Caco-2 (cell line): ENCODE measurements at regions of chr9 and their contacts with region 1.

Region 1: DNA sequence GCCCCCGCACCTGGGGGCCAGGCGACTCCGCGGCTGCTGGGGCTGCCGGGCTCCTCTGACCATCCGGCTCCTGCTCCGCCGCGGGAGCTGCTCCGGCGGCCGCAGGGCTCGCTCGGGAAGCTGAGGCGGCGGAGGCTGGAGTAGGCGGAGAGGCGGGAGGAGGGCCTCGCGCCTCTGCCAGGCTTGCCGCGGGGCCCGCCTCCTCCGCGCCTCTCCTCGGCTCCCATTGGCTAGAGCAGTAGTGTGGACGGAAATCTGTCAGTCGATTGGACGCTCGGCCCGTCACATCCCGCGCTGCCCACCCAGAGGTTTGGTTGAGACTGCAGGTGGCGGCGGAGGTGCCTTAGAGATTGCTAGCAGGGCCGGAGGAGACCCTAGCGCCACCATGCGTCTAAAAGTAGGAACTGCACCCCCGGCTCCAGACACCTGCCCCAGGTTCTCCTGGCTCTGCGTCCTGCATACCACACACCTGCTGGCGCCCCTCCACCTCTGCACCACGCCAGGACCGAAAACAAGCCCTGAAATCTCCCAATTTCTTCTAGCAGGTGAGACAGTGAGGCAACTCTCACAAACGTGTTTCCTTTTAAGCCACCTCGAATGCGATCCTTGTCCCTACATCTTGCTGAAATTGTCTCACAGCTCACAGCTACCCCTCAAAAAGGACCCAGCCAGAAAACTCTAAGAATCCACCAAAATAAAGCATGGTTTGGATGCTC is at the start of gene SCAI:
- DNase-seq: peak; percentile 99 to 100
- H3K4me3 ChIP-seq: peak within 1 kb of the TSS; percentile 92
- H3K4me3 Mint-ChIP-seq: peak within 1 kb of the TSS; percentile 96
- H3K27ac Mint-ChIP-seq: peak within 1 kb of the TSS; percentile 85
- H3K4me1 ChIP-seq: no peaks in the 10 kb centered on the region
- H3K4me1 Mint-ChIP-seq: no peaks in the 10 kb centered on the region
- H3K27me3 ChIP-seq: no peaks in the 10 kb centered on the region
- H3K27me3 Mint-ChIP-seq: no peaks in the 10 kb centered on the region
- CTCF ChIP-seq: peak; percentile 94 to 98
- total RNA-seq, gene SCAI: 10.1 and 13.0 TPM in 2 replicates

Region 2: GRCh38 chr9:124861342-124862229 is 281.9 kb before region 1 on chr9 and contains the starts of genes ARPC5L and RPL35:
- CTCF ChIA-PET with region 1: interaction called, 3 read pairs
- POLR2A ChIA-PET with region 1: no interaction called
- intact Hi-C with region 1: loop called (anchors 5 kb)
- DNase-seq: peak; percentile 95 to 97
- H3K4me3 ChIP-seq: peak within 1 kb of the TSS; percentile 85
- H3K4me3 Mint-ChIP-seq: peak within 1 kb of the TSS; percentile 85
- H3K27ac Mint-ChIP-seq: peak within 1 kb of the TSS; percentile 95
- H3K4me1 ChIP-seq: peaks cover 10% of the 10 kb centered on the region; the same call in 1 of the 2 replicates
- H3K4me1 Mint-ChIP-seq: peaks cover 7% of the 10 kb centered on the region
- H3K27me3 ChIP-seq: no peaks in the 10 kb centered on the region
- H3K27me3 Mint-ChIP-seq: no peaks in the 10 kb centered on the region
- CTCF ChIP-seq: peak in 1 of 2 experiments; percentile 30
- total RNA-seq, gene ARPC5L: 59.0 and 60.1 TPM in 2 replicates
- total RNA-seq, gene RPL35: 1,528 and 1,598 TPM in 2 replicates

Region 3: DNA sequence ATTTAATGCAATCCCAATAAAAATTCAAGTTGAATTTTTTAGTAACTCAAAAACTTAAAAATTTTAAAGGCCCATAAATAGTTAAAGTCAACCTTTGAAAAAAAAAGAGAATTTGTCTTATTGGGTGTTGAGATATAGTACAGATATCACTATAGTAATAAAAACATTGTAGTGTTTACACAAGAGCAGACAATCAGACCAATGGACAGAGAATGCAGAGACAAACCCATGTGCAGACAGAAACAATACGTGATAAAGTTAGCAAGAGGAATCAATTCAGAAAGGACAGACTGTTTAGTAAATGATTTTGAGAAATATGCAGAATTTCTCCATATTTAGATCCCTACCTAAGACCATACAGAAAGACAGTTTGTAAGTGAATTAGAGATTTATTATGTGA is 236.6 kb before region 1 on chr9:
- CTCF ChIA-PET with region 1: no interaction called
- POLR2A ChIA-PET with region 1: no interaction called
- intact Hi-C with region 1: no loop called
- DNase-seq: no peak
- H3K4me3 ChIP-seq: no peak overlapping the region
- H3K4me3 Mint-ChIP-seq: no peak overlapping the region
- H3K27ac Mint-ChIP-seq: no peak overlapping the region
- H3K4me1 ChIP-seq: no peaks in the 10 kb centered on the region
- H3K4me1 Mint-ChIP-seq: peaks cover 11% of the 10 kb centered on the region
- H3K27me3 ChIP-seq: no peaks in the 10 kb centered on the region
- H3K27me3 Mint-ChIP-seq: no peaks in the 10 kb centered on the region
- CTCF ChIP-seq: no peak

Region 4: GRCh38 chr9:124940693-124941453 is 202.7 kb before region 1 on chr9 and contains the start of gene GOLGA1:
- CTCF ChIA-PET with region 1: no interaction called
- POLR2A ChIA-PET with region 1: no interaction called
- intact Hi-C with region 1: loop called (anchors 1 kb)
- DNase-seq: peak; percentile 97 to 98
- H3K4me3 ChIP-seq: peak within 1 kb of the TSS; percentile 74
- H3K4me3 Mint-ChIP-seq: peak within 1 kb of the TSS; percentile 95
- H3K27ac Mint-ChIP-seq: peak within 1 kb of the TSS; percentile 95
- H3K4me1 ChIP-seq: peaks cover 5% of the 10 kb centered on the region; the same call in 1 of the 2 replicates
- H3K4me1 Mint-ChIP-seq: no peaks in the 10 kb centered on the region
- H3K27me3 ChIP-seq: no peaks in the 10 kb centered on the region
- H3K27me3 Mint-ChIP-seq: no peaks in the 10 kb centered on the region
- CTCF ChIP-seq: no peak
- total RNA-seq, gene GOLGA1: 18.7 and 18.9 TPM in 2 replicates

Region 5: GRCh38 chr9:125106285-125106893 is 37.1 kb before region 1 on chr9:
- CTCF ChIA-PET with region 1: no interaction called
- POLR2A ChIA-PET with region 1: no interaction called
- intact Hi-C with region 1: no loop called
- DNase-seq: no peak
- H3K4me3 ChIP-seq: no peak overlapping the region
- H3K4me3 Mint-ChIP-seq: no peak overlapping the region
- H3K27ac Mint-ChIP-seq: no peak overlapping the region
- H3K4me1 ChIP-seq: no peaks in the 10 kb centered on the region
- H3K4me1 Mint-ChIP-seq: no peaks in the 10 kb centered on the region
- H3K27me3 ChIP-seq: no peaks in the 10 kb centered on the region
- H3K27me3 Mint-ChIP-seq: no peaks in the 10 kb centered on the region
- CTCF ChIP-seq: no peak

Region 6: DNA sequence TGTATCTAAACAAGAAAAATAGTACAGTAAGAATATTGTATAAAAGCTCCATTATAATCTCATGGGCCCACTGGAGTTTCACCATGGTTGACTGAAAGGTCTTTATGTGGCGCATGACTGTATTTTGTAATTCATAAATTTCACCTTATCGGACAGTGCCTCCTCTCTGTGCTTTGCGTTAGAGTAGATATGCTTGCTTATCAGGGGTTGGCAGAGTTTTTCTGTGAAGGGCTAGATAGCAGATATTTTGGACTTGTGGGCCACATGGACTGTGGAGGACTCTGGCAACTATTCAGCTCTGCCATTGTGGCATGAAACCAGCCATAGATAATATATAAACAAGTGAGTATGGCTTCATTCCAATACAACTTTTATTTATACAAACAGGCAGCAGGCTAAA is 141.3 kb after region 1 on chr9:
- CTCF ChIA-PET with region 1: no interaction called
- POLR2A ChIA-PET with region 1: no interaction called
- intact Hi-C with region 1: no loop called
- DNase-seq: no peak
- H3K4me3 ChIP-seq: no peak overlapping the region
- H3K4me3 Mint-ChIP-seq: no peak overlapping the region
- H3K27ac Mint-ChIP-seq: no peak overlapping the region
- H3K4me1 ChIP-seq: peaks cover 6% of the 10 kb centered on the region; the same call in 1 of the 2 replicates
- H3K4me1 Mint-ChIP-seq: no peaks in the 10 kb centered on the region
- H3K27me3 ChIP-seq: no peaks in the 10 kb centered on the region
- H3K27me3 Mint-ChIP-seq: no peaks in the 10 kb centered on the region
- CTCF ChIP-seq: no peak

Region 7: DNA sequence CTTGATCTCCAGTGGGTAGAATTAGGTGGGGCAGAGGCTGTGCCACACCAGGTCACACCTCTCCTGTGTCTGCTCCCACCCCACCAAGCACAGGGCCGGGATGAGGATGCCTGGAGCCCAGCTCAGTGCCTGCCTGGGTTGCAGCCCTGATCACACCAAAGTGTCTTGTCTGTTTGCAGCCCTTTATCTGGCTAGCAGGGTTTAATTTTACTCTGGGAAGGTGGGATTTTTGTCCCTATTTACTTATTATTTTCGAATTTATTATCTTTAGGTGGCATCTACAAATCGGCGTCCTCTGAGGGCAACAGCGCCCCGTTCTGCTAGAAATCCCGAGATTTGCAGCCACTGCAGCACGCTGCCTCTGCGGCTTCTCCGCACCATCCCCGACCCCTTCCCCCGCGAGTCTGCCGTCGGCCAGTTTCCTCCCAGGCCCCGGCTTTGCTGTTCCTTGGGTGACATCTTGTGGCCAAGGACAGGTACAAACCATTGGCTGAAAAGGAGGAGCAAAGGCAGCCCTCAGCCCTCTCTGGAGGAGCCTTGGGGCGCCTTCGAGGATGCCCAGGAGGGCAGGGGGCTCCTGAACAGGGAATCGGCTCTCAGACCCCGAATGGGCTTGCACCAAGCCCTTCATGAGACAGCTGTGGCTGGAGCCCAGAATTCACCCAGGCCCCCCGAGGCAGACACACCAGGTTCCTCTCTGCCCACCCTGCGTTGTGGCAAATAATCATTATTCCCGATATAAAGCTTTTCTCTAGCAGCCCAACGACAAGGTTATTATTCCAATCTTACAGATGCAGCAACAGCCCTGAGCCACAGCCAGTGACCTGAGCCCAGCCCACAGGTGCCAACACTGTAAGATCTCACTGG is 231.1 kb after region 1 on chr9:
- CTCF ChIA-PET with region 1: no interaction called
- POLR2A ChIA-PET with region 1: no interaction called
- intact Hi-C with region 1: loop called (anchors 2 kb)
- DNase-seq: peak; percentile 81
- H3K4me3 ChIP-seq: peak overlapping the region; percentile 21
- H3K4me3 Mint-ChIP-seq: peak overlapping the region; percentile 67
- H3K27ac Mint-ChIP-seq: peak overlapping the region; percentile 44
- H3K4me1 ChIP-seq: no peaks in the 10 kb centered on the region
- H3K4me1 Mint-ChIP-seq: peaks cover 13% of the 10 kb centered on the region
- H3K27me3 ChIP-seq: no peaks in the 10 kb centered on the region
- H3K27me3 Mint-ChIP-seq: no peaks in the 10 kb centered on the region
- CTCF ChIP-seq: peak; percentile 80 to 88